CD14-positive monocyte (primary cell): ENCODE measurements at regions of chr19 and their contacts with region 1.

Region 1: GRCh38 chr19:3100081-3100864 is 6.1 kb downstream of the GNA11 start:
- DNase-seq: no peak
- H3K4me3 ChIP-seq: no peak overlapping the region
- H3K4me3 Mint-ChIP-seq: peak overlapping the region in 1 of 2 donors; percentile 99
- H3K27ac ChIP-seq: no peak overlapping the region
- H3K27ac Mint-ChIP-seq: no peak overlapping the region
- H3K4me1 ChIP-seq: peaks cover 31 to 36% of the 10 kb centered on the region in 2 donors
- H3K4me1 Mint-ChIP-seq: peaks cover 32% of the 10 kb centered on the region
- H3K27me3 ChIP-seq: peaks cover 4 to 56% of the 10 kb centered on the region in 2 donors
- H3K27me3 Mint-ChIP-seq: peaks cover 25 to 71% (median 50%) of the 10 kb centered on the region in 3 donors
- CTCF ChIP-seq: no peak

Region 2: GRCh38 chr19:2962045-2962561 is 138.2 kb before region 1 on chr19:
- intact Hi-C with region 1: loop called (anchors 5 to 10 kb)
- DNase-seq: peak; percentile 54 to 86 (median 79)
- H3K4me3 ChIP-seq: no peak overlapping the region
- H3K4me3 Mint-ChIP-seq: no peak overlapping the region
- H3K27ac ChIP-seq: no peak overlapping the region
- H3K27ac Mint-ChIP-seq: peak overlapping the region in 4 of 7 donors; percentile 26 to 76 (median 56)
- H3K4me1 ChIP-seq: peaks cover 0 to 6% of the 10 kb centered on the region in 2 donors
- H3K4me1 Mint-ChIP-seq: peaks cover 4% of the 10 kb centered on the region
- H3K27me3 ChIP-seq: no peaks in the 10 kb centered on the region
- H3K27me3 Mint-ChIP-seq: peaks cover 4 to 14% (median 5%) of the 10 kb centered on the region in 3 donors
- CTCF ChIP-seq: peak; percentile 88